Activated CD4-positive, alpha-beta T cell treated with anti-CD3 and anti-CD28 coated beads, Interleukin-2, amount 10 ng/mL, durations not matched to agents 24 days and 14 days (primary cell): ENCODE measurements at regions of chr3 and their contacts with region 1.

Region 1: GRCh38 chr3:148991194-148992026 is at the start of gene GYG1:
- DNase-seq: peak; percentile 93
- H3K4me3 Mint-ChIP-seq: peak within 1 kb of the TSS; percentile 82
- H3K27ac Mint-ChIP-seq: peak within 1 kb of the TSS; percentile 87
- H3K4me1 Mint-ChIP-seq: peaks cover 25% of the 10 kb centered on the region
- H3K27me3 Mint-ChIP-seq: no peaks in the 10 kb centered on the region
- total RNA-seq, gene GYG1: 27.4 and 28.0 TPM in 2 replicates

Region 2: GRCh38 chr3:149042789-149043386 is 51.5 kb after region 1 on chr3:
- intact Hi-C with region 1: loop called (anchors 5 kb)
- DNase-seq: no peak
- H3K4me3 Mint-ChIP-seq: peak overlapping the region; percentile 58
- H3K27ac Mint-ChIP-seq: peak overlapping the region; percentile 64
- H3K4me1 Mint-ChIP-seq: peaks cover 22% of the 10 kb centered on the region
- H3K27me3 Mint-ChIP-seq: no peaks in the 10 kb centered on the region